Activated CD8-positive, alpha-beta T cell treated with anti-CD3 and anti-CD28 coated beads for 36 hours (primary cell): ENCODE measurements at regions of chr6 and their contacts with region 1.

Region 1: DNA sequence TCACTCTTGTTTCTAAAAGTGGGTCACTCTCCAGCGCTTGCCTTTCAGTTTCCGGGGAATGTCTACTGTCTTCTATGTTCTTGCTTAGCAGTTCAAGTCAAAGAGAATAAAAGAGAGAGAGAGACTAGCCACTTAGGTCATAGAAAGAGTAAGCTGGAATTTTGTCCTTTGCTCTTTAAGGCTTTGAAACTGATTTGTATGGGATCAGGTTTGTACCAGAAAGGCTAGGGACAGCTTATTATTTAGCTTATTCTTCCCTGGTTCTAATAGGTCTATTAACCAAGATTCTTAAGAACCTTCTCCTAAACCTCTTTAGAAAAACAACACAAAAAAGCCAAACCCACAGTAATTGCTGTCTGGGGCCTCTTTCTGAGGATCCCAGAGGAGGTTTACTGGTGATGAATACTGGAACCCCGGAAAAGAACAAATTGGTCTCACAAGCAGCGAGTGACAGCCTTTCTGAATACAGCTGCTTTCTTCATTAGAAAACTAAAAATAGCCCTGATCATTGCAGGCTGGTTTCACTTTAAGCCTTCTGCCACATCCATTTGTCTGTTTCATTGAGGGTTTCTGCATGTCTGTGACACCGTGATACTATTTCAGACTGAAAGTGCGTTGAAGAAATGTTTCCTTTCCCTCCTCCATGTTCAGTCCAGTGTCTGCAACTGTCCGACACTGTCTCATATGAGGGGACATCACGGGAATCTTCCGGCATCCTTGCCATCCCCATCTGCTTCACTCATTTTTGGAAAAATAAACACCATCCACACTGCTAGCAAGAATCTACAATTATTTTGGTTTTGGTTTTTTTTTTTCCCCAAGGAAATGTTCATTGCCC is 75.1 kb upstream of the ATXN1 start:
- DNase-seq: peak; percentile 13
- ATAC-seq: peak; percentile 79
- H3K4me3 Mint-ChIP-seq: peak overlapping the region; percentile 47
- H3K27ac Mint-ChIP-seq: peak overlapping the region; percentile 81
- H3K4me1 Mint-ChIP-seq: peaks cover 38% of the 10 kb centered on the region
- H3K27me3 Mint-ChIP-seq: no peaks in the 10 kb centered on the region
- CTCF ChIP-seq: no peak

Region 2: DNA sequence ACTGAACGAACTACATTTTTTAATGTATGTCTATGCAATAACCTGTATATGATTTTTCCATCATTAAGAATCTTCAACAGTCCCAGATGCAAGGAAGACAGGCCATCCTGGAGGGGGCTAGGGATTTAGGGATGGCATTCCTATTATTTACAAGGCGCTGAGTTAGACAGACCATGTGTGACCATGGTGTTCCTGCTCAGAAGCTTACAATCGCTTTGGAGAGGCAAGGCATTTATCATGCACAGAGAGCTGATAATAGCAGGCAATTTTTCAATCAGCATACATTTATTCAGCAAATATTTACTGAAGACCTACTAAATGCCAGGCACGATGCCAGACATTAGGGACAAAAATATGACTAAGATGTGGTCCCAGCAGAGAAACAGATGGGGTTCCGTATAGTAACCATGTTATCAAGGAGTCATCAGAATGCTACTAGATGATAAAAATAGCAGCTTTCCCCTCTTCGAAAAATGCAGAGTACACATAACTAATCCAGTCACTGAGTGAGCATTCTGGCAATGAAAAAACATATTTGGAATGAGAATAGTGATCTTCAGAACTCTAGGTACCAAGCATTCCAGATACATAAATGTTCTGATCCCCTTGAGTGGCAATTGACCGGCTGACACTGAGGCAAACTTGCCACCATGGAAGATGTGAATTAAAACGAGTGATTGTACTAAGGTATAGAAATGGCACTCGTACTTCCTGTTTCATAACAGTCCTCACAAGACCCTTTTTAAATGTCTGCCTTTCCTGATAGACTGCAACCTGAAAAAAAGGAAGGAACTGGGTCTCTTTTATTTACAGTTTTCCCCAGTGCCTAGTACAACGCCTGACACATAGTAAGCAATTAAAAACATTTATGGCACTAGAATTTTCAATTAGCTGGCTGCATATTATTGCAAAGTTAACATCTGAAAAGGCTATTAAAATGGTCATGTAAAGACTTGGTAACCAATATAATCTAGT is 210.8 kb before region 1 on chr6:
- CTCF ChIA-PET with region 1: no interaction called
- POLR2A ChIA-PET with region 1: no interaction called
- intact Hi-C with region 1: no loop called
- DNase-seq: no peak
- ATAC-seq: no peak
- H3K4me3 Mint-ChIP-seq: no peak overlapping the region
- H3K27ac Mint-ChIP-seq: no peak overlapping the region
- H3K4me1 Mint-ChIP-seq: peaks cover 27% of the 10 kb centered on the region
- H3K27me3 Mint-ChIP-seq: no peaks in the 10 kb centered on the region
- CTCF ChIP-seq: no peak

Region 3: GRCh38 chr6:16956361-16956760 is 120.0 kb after region 1 on chr6:
- CTCF ChIA-PET with region 1: no interaction called
- POLR2A ChIA-PET with region 1: interaction called, 3 read pairs
- intact Hi-C with region 1: loop called (anchors 10 kb)
- DNase-seq: peak; percentile 51
- ATAC-seq: peak; percentile 87
- H3K4me3 Mint-ChIP-seq: no peak overlapping the region
- H3K27ac Mint-ChIP-seq: peak overlapping the region; percentile 79
- H3K4me1 Mint-ChIP-seq: peaks cover 35% of the 10 kb centered on the region
- H3K27me3 Mint-ChIP-seq: peaks cover 15% of the 10 kb centered on the region
- CTCF ChIP-seq: no peak